Dendritic cell treated with granulocyte-macrophage colony-stimulating factor and Interleukin-4, amounts not matched to agents 40 ng/mL and 50 ng/mL, for 4 days (primary cell): ENCODE measurements at regions of chr7 and their contacts with region 1.

Region 1: GRCh38 chr7:24576171-24577025 is 3.1 kb downstream of the PALS2 start:
- H3K4me3 Mint-ChIP-seq: no peak overlapping the region
- H3K27ac Mint-ChIP-seq: no peak overlapping the region
- H3K4me1 Mint-ChIP-seq: peaks cover 21% of the 10 kb centered on the region
- H3K27me3 Mint-ChIP-seq: peaks cover 27% of the 10 kb centered on the region

Region 2: GRCh38 chr7:24290004-24290641 is 286.3 kb before region 1 on chr7:
- intact Hi-C with region 1: no loop called
- H3K4me3 Mint-ChIP-seq: no peak overlapping the region
- H3K27ac Mint-ChIP-seq: no peak overlapping the region
- H3K4me1 Mint-ChIP-seq: peaks cover 5% of the 10 kb centered on the region
- H3K27me3 Mint-ChIP-seq: peaks cover 24% of the 10 kb centered on the region

Region 3: GRCh38 chr7:25098096-25099046 is 522.0 kb after region 1 on chr7:
- intact Hi-C with region 1: loop called (anchors 2 kb)
- H3K4me3 Mint-ChIP-seq: no peak overlapping the region
- H3K27ac Mint-ChIP-seq: no peak overlapping the region
- H3K4me1 Mint-ChIP-seq: peaks cover 8% of the 10 kb centered on the region
- H3K27me3 Mint-ChIP-seq: peaks cover 4% of the 10 kb centered on the region